ENCODE measurements at regions of chr14 and their contacts with region 1.

Region 1: GRCh38 chr14:39474416-39474911 is 42.2 kb upstream of the FBXO33 start:
- DNase-seq: no peak
- H3K4me3 ChIP-seq: no peak overlapping the region
- H3K27ac ChIP-seq: no peak overlapping the region
- H3K4me1 ChIP-seq: no peaks in the 10 kb centered on the region
- H3K27me3 ChIP-seq: no peaks in the 10 kb centered on the region
- CTCF ChIP-seq: no peak
- POLR2A ChIP-seq: no peak

Region 2: DNA sequence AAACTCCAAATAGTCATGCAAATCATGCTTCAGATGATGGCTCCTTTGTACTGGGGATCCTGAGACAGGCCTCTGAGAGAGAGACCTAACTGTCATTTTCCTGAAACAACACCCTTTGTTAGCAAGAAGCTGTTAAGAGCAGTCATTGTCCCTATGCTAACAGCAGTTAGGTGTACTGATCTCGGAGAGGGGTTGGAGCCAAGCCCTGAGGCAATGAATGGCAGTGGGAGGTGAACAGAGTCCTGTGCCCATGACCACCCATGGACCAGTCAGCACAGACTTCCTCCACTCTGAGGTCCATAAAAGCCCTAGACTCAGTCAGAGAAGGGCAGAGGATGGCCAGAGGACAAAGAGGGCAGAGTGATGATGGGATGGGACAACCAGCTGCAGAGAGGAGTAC is 1384.6 kb after region 1 on chr14:
- CTCF ChIA-PET with region 1: no interaction called
- POLR2A ChIA-PET with region 1: no interaction called
- dilution Hi-C with region 1: no loop called
- intact Hi-C with region 1: loop called (anchors 5 kb)
- DNase-seq: no peak
- H3K4me3 ChIP-seq: no peak overlapping the region
- H3K27ac ChIP-seq: no peak overlapping the region
- H3K4me1 ChIP-seq: no peaks in the 10 kb centered on the region
- H3K27me3 ChIP-seq: no peaks in the 10 kb centered on the region
- CTCF ChIP-seq: no peak
- POLR2A ChIP-seq: no peak